Heart right ventricle (tissue), 16 donors: ENCODE measurements at regions of chr9 and their contacts with region 1.

Region 1: GRCh38 chr9:84261082-84261746 is 79.3 kb downstream of the SLC28A3 start:
- DNase-seq: peak; percentile 82 to 83
- ATAC-seq: peak; percentile 91 to 99 (median 96)
- H3K4me3 ChIP-seq: peak overlapping the region in 6 of 10 donors; percentile 25 to 42 (median 36)
- H3K27ac ChIP-seq: no peak overlapping the region
- H3K4me1 ChIP-seq: peaks cover 0 to 8% (median 0%) of the 10 kb centered on the region in 9 donors
- H3K27me3 ChIP-seq: peaks cover 0 to 10% (median 0%) of the 10 kb centered on the region in 7 donors
- CTCF ChIP-seq: peak; percentile 68 to 97 (median 94)

Region 2: DNA sequence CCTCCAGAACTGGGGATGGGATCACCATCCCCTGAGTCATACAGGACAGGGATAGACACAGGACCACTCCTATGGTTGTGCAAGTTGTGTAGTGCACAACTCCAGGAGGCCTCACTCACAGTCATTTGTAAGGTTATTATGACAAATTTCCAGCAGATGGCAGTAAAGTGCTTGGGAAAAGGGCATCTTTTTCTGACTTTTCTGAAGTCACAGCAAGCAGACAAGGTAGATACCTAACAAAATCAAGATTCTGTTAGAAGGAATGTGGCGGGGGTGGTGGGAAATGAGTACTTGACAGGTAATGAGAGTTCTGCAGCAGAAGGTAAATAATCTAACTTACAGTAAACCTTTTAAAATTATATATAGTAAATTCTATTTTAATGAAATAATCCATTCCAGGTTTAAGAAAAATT is 323.3 kb before region 1 on chr9:
- intact Hi-C with region 1: loop called (anchors 1 to 5 kb)
- DNase-seq: peak in 1 of 2 donors; percentile 13
- ATAC-seq: peak in 6 of 8 donors; percentile 42 to 64 (median 55)
- H3K4me3 ChIP-seq: no peak overlapping the region
- H3K27ac ChIP-seq: no peak overlapping the region
- H3K4me1 ChIP-seq: peaks cover 0 to 35% (median 8%) of the 10 kb centered on the region in 9 donors
- H3K27me3 ChIP-seq: no peaks in the 10 kb centered on the region
- CTCF ChIP-seq: peak; percentile 57 to 82 (median 71)

Region 3: DNA sequence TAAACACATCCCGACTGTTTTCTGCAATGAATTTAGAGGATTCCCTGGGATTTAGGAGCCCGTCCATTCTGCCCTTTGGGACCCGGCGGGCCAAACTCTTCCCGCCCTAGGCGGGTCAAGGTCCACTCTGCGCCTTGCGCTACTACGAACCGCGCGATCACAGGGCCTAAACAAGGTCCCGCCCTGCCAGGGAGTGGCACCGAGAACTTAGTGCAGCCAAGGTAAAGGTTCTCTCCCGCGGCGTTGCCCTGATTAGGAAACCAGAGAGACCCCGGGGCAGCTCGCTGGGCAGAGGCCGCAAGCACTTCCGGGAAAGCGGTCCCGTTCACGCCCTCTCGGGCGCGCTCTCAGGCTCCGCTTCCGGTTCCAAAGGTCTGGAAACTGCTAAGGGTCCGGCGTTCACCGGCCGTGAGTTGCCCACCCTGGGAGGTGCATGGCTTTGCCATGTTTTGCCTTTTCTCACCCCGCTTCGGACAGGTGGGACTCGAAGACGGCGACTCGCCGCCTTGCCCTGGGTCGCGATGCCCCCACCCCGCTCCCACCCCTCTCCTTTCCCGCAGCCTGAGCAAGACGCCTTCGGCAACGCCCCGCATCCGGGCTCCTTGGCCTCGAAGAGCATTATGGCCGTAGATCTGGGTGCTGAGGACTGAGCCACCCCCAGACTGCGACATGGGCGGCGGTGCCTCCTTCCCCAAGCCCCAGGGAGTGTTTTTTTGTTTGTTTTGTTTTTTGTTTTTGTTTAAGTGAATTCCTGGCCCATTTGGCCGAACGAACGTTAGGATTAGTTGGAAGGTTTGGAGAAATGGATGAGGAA is 304.6 kb before region 1 on chr9:
- intact Hi-C with region 1: loop called in 1 of 10 experiments (anchors 5 kb)
- DNase-seq: peak; percentile 78 to 81
- ATAC-seq: peak; percentile 92 to 97 (median 94)
- H3K4me3 ChIP-seq: peak overlapping the region; percentile 60 to 85 (median 80)
- H3K27ac ChIP-seq: peak overlapping the region; percentile 28 to 92 (median 88)
- H3K4me1 ChIP-seq: peaks cover 4 to 23% (median 17%) of the 10 kb centered on the region in 9 donors
- H3K27me3 ChIP-seq: no peaks in the 10 kb centered on the region
- CTCF ChIP-seq: no peak

Region 4: DNA sequence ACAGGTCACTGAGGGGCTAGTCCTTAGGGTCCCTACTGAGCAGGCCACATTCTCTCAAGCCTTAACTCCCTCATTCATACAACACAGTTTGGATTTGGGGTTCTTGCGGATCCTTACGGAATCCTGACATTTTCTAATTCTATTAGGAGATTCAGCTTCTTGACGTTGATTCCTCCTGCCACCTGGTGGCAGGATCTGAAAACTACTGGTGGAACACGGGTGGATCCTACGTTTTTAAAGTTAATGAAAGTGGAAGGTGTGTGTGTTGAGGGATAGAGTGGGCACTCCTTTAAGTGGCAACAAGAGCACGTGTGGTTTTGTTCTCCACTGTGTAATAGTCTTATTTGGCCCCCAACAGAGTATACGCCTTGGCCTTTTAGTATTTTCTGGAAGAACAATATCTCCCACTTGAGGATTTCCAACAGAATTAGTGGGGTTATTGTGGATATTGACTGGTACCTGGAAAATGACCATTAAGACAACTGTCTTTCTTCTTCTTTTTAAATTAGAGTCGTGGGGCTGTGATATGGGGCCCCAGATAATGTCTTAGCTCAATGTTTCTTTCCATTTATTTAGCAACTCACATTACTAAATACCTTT is 54.2 kb after region 1 on chr9:
- intact Hi-C with region 1: loop called in 1 of 10 experiments (anchors 5 kb)
- DNase-seq: peak; percentile 14 to 40
- ATAC-seq: peak in 3 of 8 donors; percentile 50 to 57 (median 55)
- H3K4me3 ChIP-seq: no peak overlapping the region
- H3K27ac ChIP-seq: no peak overlapping the region
- H3K4me1 ChIP-seq: peaks cover 0 to 17% (median 0%) of the 10 kb centered on the region in 9 donors
- H3K27me3 ChIP-seq: no peaks in the 10 kb centered on the region
- CTCF ChIP-seq: peak; percentile 62 to 87 (median 81)